Natural killer cell (primary cell): ENCODE measurements at regions of chr17 and their contacts with region 1.

Region 1: GRCh38 chr17:46266656-46267544 is 28.0 kb upstream of the LRRC37A start:
- DNase-seq: peak; percentile 86 to 93
- ATAC-seq: peak; percentile 77 to 95 (median 88)
- H3K4me3 ChIP-seq: peak overlapping the region; percentile 98
- H3K4me3 Mint-ChIP-seq: peak overlapping the region; percentile 94
- H3K27ac ChIP-seq: peak overlapping the region; percentile 83
- H3K27ac Mint-ChIP-seq: peak overlapping the region; percentile 85 to 91
- H3K4me1 ChIP-seq: peaks cover 40% of the 10 kb centered on the region
- H3K4me1 Mint-ChIP-seq: peaks cover 32 to 33% of the 10 kb centered on the region in 2 donors
- H3K27me3 ChIP-seq: no peaks in the 10 kb centered on the region
- H3K27me3 Mint-ChIP-seq: peaks cover 0 to 3% of the 10 kb centered on the region in 2 donors
- CTCF ChIP-seq: no peak

Region 2: GRCh38 chr17:45828628-45829027 is 438.3 kb before region 1 on chr17:
- intact Hi-C with region 1: no loop called
- DNase-seq: no peak
- ATAC-seq: no peak
- H3K4me3 ChIP-seq: no peak overlapping the region
- H3K4me3 Mint-ChIP-seq: no peak overlapping the region
- H3K27ac ChIP-seq: no peak overlapping the region
- H3K27ac Mint-ChIP-seq: no peak overlapping the region
- H3K4me1 ChIP-seq: no peaks in the 10 kb centered on the region
- H3K4me1 Mint-ChIP-seq: no peaks in the 10 kb centered on the region
- H3K27me3 ChIP-seq: no peaks in the 10 kb centered on the region
- H3K27me3 Mint-ChIP-seq: peaks cover 0 to 3% of the 10 kb centered on the region in 2 donors
- CTCF ChIP-seq: no peak

Region 3: DNA sequence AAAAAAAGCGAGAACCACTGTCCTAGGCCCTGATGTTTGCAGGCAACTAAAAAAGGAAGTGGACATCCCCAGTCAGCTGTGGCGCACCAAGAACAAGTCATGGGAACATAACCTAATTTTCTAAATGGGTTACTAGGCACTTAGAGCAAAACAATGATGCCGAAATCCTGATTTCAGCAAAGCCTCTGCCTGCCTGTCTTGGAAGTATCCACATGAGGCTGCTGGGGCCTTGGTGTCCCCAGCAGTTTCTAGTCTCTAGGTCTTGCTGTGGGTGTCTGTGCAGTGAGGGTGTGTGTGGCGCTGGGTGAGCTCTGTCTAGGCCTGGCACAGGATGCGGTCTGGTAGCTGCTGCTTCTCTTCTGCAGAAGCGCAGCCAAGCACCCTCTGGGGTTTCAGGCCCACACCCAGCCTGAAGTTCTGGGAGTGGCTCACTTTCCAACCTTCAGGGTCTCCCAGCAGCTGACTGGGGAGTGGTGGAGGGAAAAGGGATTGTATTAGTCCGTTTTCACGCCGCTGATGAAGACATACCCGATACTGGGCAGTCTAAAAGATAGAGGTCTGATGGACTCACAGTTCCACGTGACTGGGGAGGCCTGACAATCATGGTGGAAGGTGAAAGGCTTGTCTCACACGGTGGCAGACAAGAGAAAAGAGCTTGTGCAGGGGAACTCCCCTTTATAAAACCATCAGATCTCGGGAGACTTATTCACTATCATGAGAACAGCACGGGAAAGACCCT is 246.7 kb before region 1 on chr17:
- intact Hi-C with region 1: loop called (anchors 2 kb)
- DNase-seq: peak; percentile 77 to 86
- ATAC-seq: peak; percentile 92 to 97 (median 95)
- H3K4me3 ChIP-seq: no peak overlapping the region
- H3K4me3 Mint-ChIP-seq: peak overlapping the region; percentile 74
- H3K27ac ChIP-seq: peak overlapping the region; percentile 94
- H3K27ac Mint-ChIP-seq: peak overlapping the region; percentile 93 to 99
- H3K4me1 ChIP-seq: peaks cover 52% of the 10 kb centered on the region
- H3K4me1 Mint-ChIP-seq: peaks cover 43 to 50% of the 10 kb centered on the region in 2 donors
- H3K27me3 ChIP-seq: no peaks in the 10 kb centered on the region
- H3K27me3 Mint-ChIP-seq: no peaks in the 10 kb centered on the region
- CTCF ChIP-seq: no peak